Caco-2 (cell line): ENCODE measurements at regions of chrX and their contacts with region 1.

Region 1: DNA sequence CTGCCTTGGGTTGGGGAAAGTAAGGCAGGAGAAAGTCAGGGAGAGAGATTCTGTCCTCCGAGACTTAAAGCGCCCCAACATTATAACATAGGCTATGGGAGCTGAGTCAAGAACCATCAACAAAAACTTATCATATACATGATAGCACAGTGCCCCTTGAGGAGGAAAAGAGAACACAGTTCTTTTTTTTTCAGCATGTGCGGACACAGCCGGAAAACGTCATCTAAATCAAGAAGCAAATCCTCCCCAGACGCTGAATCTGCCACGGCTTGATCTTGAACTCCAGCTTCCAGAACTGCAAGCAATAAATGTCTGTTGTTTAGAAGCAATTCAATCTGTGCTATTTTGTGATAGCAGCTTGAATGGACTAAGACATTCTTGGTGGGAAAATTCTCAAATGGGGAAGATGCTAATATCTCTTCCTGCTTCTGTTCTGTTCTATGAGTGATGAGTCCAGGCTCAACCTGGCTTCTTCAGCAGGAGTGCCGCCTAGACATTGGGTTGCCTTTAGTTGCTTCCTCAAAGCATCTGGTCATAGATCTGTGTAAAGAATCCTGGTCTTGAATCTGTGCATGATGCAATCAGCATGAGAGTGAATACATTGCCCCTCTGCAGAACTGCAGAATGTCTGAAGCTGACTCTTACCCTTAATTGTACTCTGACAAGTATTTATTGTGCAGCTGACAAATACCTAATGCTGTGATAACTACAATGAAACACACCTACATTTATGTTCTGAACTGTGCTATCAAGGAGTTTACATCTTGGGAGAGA is 549.8 kb upstream of the PRKX start:
- DNase-seq: peak in 1 of 2 experiments; percentile 4
- H3K4me3 ChIP-seq: no peak overlapping the region
- H3K4me3 Mint-ChIP-seq: no peak overlapping the region
- H3K27ac Mint-ChIP-seq: no peak overlapping the region
- H3K4me1 ChIP-seq: no peaks in the 10 kb centered on the region
- H3K4me1 Mint-ChIP-seq: no peaks in the 10 kb centered on the region
- H3K27me3 ChIP-seq: no peaks in the 10 kb centered on the region
- H3K27me3 Mint-ChIP-seq: no peaks in the 10 kb centered on the region
- CTCF ChIP-seq: peak in 1 of 2 experiments; percentile 5

Region 2: GRCh38 chrX:3962511-3963311 is 300.5 kb before region 1 on chrX:
- CTCF ChIA-PET with region 1: no interaction called
- POLR2A ChIA-PET with region 1: no interaction called
- intact Hi-C with region 1: loop called (anchors 2 kb)
- DNase-seq: peak in 1 of 2 experiments; percentile 36
- H3K4me3 ChIP-seq: no peak overlapping the region
- H3K4me3 Mint-ChIP-seq: peak overlapping the region; percentile 46
- H3K27ac Mint-ChIP-seq: no peak overlapping the region
- H3K4me1 ChIP-seq: no peaks in the 10 kb centered on the region
- H3K4me1 Mint-ChIP-seq: peaks cover 7% of the 10 kb centered on the region
- H3K27me3 ChIP-seq: no peaks in the 10 kb centered on the region
- H3K27me3 Mint-ChIP-seq: no peaks in the 10 kb centered on the region
- CTCF ChIP-seq: peak; percentile 40 to 52

Region 3: GRCh38 chrX:4240541-4241194 is 22.5 kb before region 1 on chrX:
- CTCF ChIA-PET with region 1: no interaction called
- POLR2A ChIA-PET with region 1: no interaction called
- intact Hi-C with region 1: no loop called
- DNase-seq: no peak
- H3K4me3 ChIP-seq: no peak overlapping the region
- H3K4me3 Mint-ChIP-seq: no peak overlapping the region
- H3K27ac Mint-ChIP-seq: no peak overlapping the region
- H3K4me1 ChIP-seq: no peaks in the 10 kb centered on the region
- H3K4me1 Mint-ChIP-seq: no peaks in the 10 kb centered on the region
- H3K27me3 ChIP-seq: no peaks in the 10 kb centered on the region
- H3K27me3 Mint-ChIP-seq: no peaks in the 10 kb centered on the region
- CTCF ChIP-seq: no peak

Region 4: DNA sequence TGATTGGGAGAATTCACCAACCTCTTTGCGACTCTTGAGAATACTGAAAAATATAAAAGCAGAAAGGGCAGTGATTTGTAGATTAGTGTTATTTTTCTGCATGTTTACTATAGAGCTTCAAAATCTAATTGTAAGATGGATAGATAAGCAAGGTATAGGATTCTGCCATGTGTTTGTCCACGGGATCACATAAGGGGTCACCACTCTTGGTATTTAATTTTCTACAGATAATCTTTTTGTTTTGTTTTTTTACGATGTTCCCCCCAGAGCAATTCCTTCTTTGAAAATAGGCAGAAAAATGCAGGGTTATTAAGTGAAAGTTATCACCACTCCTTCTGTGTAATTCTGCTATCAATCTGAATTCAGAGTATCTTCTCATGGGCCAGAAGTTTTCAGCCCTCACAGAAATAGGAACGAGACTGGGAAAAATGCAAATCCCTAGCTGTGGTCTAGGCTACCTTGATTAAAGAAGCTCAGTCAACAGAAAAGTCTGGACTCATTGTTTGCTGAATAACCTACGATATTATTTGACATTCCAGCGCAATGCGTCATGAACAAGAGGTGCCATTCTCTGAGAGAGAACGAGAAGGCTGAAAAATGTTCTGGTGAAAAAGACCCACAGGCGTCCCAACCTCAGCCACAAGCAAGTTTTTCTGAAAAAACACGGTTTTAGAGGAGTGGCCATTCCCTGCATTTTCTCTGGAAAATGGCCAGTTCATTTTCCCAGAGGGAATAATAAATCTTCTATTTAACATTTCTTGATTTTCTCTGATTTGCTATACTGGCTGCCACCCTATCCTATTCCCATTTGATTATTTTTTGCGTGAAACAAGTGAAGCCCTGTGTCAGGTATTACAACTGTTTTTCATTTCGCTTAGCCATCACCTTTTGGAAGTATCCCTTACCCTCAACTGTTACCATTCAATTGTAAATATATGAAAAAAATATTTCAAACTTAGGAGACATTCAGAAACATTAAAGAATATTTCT is 567.6 kb after region 1 on chrX:
- CTCF ChIA-PET with region 1: no interaction called
- POLR2A ChIA-PET with region 1: no interaction called
- intact Hi-C with region 1: no loop called
- DNase-seq: peak; percentile 50 to 58
- H3K4me3 ChIP-seq: no peak overlapping the region
- H3K4me3 Mint-ChIP-seq: peak overlapping the region; percentile 43
- H3K27ac Mint-ChIP-seq: peak overlapping the region; percentile 86
- H3K4me1 ChIP-seq: peaks cover 19% of the 10 kb centered on the region
- H3K4me1 Mint-ChIP-seq: no peaks in the 10 kb centered on the region
- H3K27me3 ChIP-seq: no peaks in the 10 kb centered on the region
- H3K27me3 Mint-ChIP-seq: no peaks in the 10 kb centered on the region
- CTCF ChIP-seq: no peak